ENCODE measurements at regions of chr1 and their contacts with region 1.

Region 1: DNA sequence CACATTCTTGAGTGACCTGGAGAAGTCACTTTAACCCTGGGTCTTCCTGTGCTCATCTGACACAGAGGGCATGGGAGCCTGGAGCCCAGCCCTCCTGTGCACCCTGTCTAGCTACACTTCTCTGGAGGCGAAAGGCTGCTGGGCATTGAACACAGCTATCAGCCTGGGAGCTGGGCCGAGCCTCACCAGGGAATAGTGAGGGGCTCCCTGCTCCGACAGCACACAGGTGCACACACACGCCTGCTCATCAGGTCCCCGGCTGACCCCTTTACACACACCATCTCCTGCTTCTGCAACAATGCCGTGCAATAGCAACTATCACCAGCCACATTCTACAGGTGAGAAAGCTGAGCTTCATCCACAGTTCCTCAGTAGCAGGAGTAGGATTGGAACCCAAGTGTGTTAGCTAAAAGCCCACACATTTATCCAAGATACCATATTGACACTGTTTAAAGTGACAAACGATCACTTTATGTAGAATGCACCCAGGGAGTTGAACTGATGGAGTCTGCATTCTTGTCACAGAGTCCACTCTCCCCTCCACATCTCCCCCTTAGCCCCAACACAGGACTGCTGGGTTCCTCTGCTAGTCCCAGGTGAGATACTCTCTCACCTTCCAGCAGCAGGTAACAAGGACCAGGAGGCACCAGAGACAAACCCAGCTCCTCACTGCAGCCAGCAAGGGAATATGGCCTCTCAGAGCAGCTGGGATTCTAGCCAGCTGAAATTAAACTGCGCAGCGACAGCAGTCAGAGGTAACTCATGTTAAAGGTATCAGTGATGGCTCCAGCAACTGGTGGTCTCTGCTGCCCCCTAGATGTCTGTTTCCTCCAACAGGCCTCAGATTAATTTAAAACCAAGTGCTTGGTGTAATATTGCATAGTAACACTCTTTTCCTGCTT is 18.3 kb upstream of the CAPN8 start:
- DNase-seq: peak; percentile 90
- ATAC-seq: peak; percentile 89
- H3K4me3 ChIP-seq: no peak overlapping the region
- H3K27ac ChIP-seq: no peak overlapping the region
- H3K4me1 ChIP-seq: peaks cover 3% of the 10 kb centered on the region; the same call in 1 of the 2 replicates
- H3K27me3 ChIP-seq: no peaks in the 10 kb centered on the region
- CTCF ChIP-seq: peak; percentile 94

Region 2: GRCh38 chr1:223133824-223134435 is 549.9 kb before region 1 on chr1:
- CTCF ChIA-PET with region 1: interaction called, 19 read pairs
- POLR2A ChIA-PET with region 1: no interaction called
- intact Hi-C with region 1: loop called (anchors 1 kb)
- DNase-seq: peak; percentile 94
- ATAC-seq: peak; percentile 92
- H3K4me3 ChIP-seq: peak overlapping the region; percentile 62
- H3K27ac ChIP-seq: peak overlapping the region; percentile 84
- H3K4me1 ChIP-seq: peaks cover 33% of the 10 kb centered on the region
- H3K27me3 ChIP-seq: no peaks in the 10 kb centered on the region
- CTCF ChIP-seq: peak; percentile 96

Region 3: GRCh38 chr1:223531742-223532341 is 152.0 kb before region 1 on chr1:
- CTCF ChIA-PET with region 1: interaction called, 3 read pairs
- POLR2A ChIA-PET with region 1: no interaction called
- intact Hi-C with region 1: loop called (anchors 1 kb)
- DNase-seq: peak; percentile 79
- ATAC-seq: peak; percentile 69
- H3K4me3 ChIP-seq: no peak overlapping the region
- H3K27ac ChIP-seq: no peak overlapping the region
- H3K4me1 ChIP-seq: no peaks in the 10 kb centered on the region
- H3K27me3 ChIP-seq: 0 out of 2 replicates have a peak, but pooled peaks cover 8% of the 10 kb centered on the region
- CTCF ChIP-seq: peak; percentile 95

Region 4: GRCh38 chr1:223631473-223631872 is 52.4 kb before region 1 on chr1:
- CTCF ChIA-PET with region 1: interaction called, 4 read pairs
- POLR2A ChIA-PET with region 1: no interaction called
- intact Hi-C with region 1: loop called (anchors 1 kb)
- DNase-seq: peak; percentile 79
- ATAC-seq: peak; percentile 91
- H3K4me3 ChIP-seq: no peak overlapping the region
- H3K27ac ChIP-seq: no peak overlapping the region
- H3K4me1 ChIP-seq: peaks cover 21% of the 10 kb centered on the region
- H3K27me3 ChIP-seq: no peaks in the 10 kb centered on the region
- CTCF ChIP-seq: peak; percentile 56